ENCODE measurements at regions of chr7 and their contacts with region 1.

Region 1: DNA sequence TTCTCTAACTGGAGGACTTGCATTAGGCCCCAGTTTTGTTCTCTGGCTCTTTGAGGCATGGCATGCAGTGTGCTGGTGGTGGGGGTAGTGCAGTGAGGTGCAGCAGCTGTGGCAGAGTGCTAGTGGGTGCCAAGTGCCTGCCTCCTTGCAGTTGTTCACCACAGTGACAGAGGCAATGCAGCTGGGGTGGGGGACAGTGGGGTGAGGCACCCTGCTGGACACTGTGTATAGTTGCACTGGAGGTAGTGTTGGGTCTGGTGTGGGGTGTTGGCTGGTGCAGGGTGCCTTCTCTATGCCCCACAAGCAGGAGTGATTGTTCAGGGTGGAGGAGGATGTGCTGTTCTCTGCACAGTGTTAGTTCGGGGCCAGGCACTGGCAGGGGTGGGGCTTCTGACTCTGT is 21.7 kb upstream of the KEL start:
- DNase-seq: no peak
- H3K4me3 ChIP-seq: no peak overlapping the region
- H3K27ac ChIP-seq: no peak overlapping the region
- H3K4me1 ChIP-seq: no peaks in the 10 kb centered on the region
- H3K27me3 ChIP-seq: peaks cover 0 to 17% (median 0%) of the 10 kb centered on the region in 7 donors
- CTCF ChIP-seq: no peak
- POLR2A ChIP-seq: no peak

Region 2: DNA sequence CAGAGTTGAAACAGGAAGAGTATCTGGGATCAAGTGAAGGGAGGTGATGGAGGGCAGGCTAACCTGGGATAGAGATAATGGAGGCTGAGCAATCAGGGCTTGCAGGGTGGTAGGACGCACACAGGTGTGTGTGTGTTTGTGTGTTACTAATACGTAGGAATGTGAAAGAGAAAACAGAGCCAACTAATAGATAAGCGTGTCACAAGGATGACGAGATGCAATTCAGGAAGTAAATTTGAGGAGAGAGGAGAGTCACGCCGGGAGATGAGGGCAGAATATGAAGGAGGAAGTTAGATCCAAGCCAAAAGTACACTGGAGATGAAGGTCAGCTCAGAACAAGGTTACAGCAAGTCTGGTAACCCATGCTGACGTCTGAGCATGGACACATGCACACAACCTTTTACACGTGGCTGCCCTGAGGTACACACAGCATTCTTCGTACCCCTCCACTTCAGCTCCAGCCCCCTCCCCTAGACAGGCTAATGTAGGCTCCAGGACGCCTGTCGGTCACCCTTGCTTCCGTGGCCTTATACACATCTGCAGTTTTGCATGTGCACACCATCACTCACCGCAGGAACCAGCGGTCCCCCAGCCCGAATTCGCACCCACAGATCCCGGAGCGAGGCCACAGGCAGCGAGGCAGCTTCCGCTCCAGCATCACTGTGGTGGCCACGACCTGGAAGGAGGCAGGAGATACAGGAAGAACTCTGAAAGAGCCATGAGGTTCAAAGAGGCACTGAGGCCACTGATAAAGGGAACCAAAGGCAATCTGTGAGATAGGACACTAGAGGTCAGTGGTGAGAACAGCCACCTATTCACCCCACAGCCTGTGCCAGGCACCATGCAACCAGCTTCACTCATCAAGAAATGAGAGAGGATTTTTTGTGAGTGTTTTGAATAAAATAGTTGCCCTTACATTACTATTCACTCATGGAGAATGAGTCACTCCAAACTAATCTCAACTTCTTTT is 74.6 kb before region 1 on chr7:
- intact Hi-C with region 1: loop called (anchors 10 kb)
- DNase-seq: no peak
- H3K4me3 ChIP-seq: no peak overlapping the region
- H3K27ac ChIP-seq: peak overlapping the region in 1 of 8 donors; percentile 46
- H3K4me1 ChIP-seq: peaks cover 0 to 18% (median 0%) of the 10 kb centered on the region in 6 donors
- H3K27me3 ChIP-seq: peaks cover 0 to 10% (median 0%) of the 10 kb centered on the region in 7 donors
- CTCF ChIP-seq: peak in 6 of 11 experiments; percentile 19 to 60 (median 41)
- POLR2A ChIP-seq: no peak

Region 3: DNA sequence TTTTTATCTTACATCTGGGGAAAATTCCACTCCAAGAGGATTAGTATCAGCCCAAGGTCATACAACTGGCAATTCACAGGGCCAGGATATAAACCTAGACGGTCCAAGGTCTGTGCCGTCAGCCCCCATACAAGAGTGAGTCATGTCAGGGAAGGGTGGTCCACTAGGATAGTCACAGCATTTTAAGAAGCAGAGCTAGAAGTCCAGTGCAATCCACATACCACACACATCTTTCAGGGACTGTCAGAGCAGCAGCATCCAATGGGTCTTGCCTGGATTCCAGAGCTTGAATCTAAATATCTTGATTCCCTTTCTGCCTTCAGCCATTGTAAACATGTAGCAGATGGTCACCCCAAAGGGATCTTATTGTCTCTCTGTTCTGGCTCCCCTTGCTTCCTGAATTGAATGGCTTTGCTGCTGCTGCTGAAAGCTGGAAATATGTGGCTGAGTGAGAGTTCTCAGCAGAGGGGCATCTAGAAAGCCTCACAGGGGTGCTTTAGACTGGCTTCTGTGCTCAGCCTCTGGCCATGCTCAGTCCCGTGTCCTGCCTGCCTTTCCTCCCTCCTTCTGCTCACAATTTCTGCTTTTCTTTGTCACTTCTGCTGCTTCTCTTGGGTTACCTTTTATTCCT is 58.4 kb after region 1 on chr7:
- intact Hi-C with region 1: no loop called
- DNase-seq: no peak
- H3K4me3 ChIP-seq: no peak overlapping the region
- H3K27ac ChIP-seq: no peak overlapping the region
- H3K4me1 ChIP-seq: peaks cover 0 to 12% (median 7%) of the 10 kb centered on the region in 6 donors
- H3K27me3 ChIP-seq: no peaks in the 10 kb centered on the region
- CTCF ChIP-seq: no peak
- POLR2A ChIP-seq: no peak